Activated CD4-positive, alpha-beta memory T cell treated with anti-CD3 and anti-CD28 coated beads for 36 hours (primary cell): ENCODE measurements at regions of chr3 and their contacts with region 1.

Region 1: GRCh38 chr3:112519424-112520001 is 20.2 kb upstream of the BTLA start:
- DNase-seq: no peak
- H3K4me3 Mint-ChIP-seq: no peak overlapping the region
- H3K27ac Mint-ChIP-seq: no peak overlapping the region
- H3K4me1 Mint-ChIP-seq: peaks cover 18% of the 10 kb centered on the region
- H3K27me3 Mint-ChIP-seq: no peaks in the 10 kb centered on the region

Region 2: GRCh38 chr3:112136959-112137693 is 382.4 kb before region 1 on chr3:
- CTCF ChIA-PET with region 1: interaction called, 17 read pairs
- POLR2A ChIA-PET with region 1: no interaction called
- intact Hi-C with region 1: loop called (anchors 1 kb)
- DNase-seq: peak; percentile 59
- H3K4me3 Mint-ChIP-seq: no peak overlapping the region
- H3K27ac Mint-ChIP-seq: no peak overlapping the region
- H3K4me1 Mint-ChIP-seq: peaks cover 70% of the 10 kb centered on the region
- H3K27me3 Mint-ChIP-seq: no peaks in the 10 kb centered on the region

Region 3: DNA sequence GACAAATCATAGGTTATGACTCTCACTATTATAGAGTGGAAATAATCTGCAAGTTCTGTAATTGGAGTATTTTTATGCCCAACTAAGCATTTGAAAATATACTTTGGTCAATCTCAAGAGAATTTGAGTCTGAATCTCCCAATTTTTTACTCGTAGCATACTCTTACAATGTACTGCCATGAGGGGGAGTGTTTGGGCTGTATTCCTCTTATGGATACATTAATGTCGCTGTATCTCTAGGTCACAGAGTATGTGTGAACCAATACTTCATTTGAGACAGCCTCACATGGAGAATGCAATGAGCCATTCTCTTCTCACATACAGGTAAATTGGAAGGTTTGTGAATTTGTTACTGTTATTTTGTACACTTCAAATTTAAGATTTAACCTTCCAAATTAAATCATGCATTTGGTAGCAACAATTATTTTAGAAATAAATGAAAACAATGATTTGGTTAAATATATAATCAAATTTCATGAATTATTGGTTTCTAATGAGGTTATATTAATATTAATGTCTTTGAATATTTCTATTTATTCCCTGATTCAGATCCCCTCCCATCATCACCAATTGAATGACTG is 192.1 kb before region 1 on chr3:
- CTCF ChIA-PET with region 1: interaction called, 24 read pairs
- POLR2A ChIA-PET with region 1: no interaction called
- intact Hi-C with region 1: loop called (anchors 1 kb)
- DNase-seq: no peak
- H3K4me3 Mint-ChIP-seq: no peak overlapping the region
- H3K27ac Mint-ChIP-seq: no peak overlapping the region
- H3K4me1 Mint-ChIP-seq: peaks cover 5% of the 10 kb centered on the region
- H3K27me3 Mint-ChIP-seq: peaks cover 5% of the 10 kb centered on the region

Region 4: GRCh38 chr3:112333002-112333380 is 186.5 kb before region 1 on chr3 and contains the start of gene CD200:
- CTCF ChIA-PET with region 1: interaction called, 24 read pairs
- POLR2A ChIA-PET with region 1: no interaction called
- intact Hi-C with region 1: no loop called
- DNase-seq: peak; percentile 71
- H3K4me3 Mint-ChIP-seq: peak within 1 kb of the TSS; percentile 87
- H3K27ac Mint-ChIP-seq: peak within 1 kb of the TSS; percentile 88
- H3K4me1 Mint-ChIP-seq: peaks cover 46% of the 10 kb centered on the region
- H3K27me3 Mint-ChIP-seq: no peaks in the 10 kb centered on the region
- total RNA-seq, gene CD200: 34.2 to 34.5 TPM

Region 5: DNA sequence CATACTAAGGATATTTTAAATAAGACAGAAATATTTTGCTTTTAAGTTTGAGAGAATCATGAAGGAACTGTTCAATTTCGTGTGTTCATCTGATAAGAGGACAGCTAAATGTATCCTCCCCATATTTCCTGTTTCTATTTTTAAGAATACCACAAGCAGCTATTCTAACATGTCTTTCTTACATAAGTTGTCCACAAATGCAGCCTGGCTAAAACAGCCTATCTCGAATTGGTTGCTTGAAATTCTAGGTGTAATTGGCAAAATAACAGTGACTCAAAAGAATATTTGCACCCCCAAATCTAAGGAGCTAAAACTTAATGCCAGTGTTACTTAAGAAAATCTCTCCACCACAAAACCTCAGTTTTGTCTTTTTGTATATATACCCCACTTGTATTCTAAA is 55.2 kb before region 1 on chr3:
- CTCF ChIA-PET with region 1: interaction called, 3 read pairs
- POLR2A ChIA-PET with region 1: no interaction called
- intact Hi-C with region 1: loop called (anchors 1 kb)
- DNase-seq: no peak
- H3K4me3 Mint-ChIP-seq: no peak overlapping the region
- H3K27ac Mint-ChIP-seq: peak overlapping the region; percentile 31
- H3K4me1 Mint-ChIP-seq: peaks cover 84% of the 10 kb centered on the region
- H3K27me3 Mint-ChIP-seq: no peaks in the 10 kb centered on the region

Region 6: GRCh38 chr3:112489674-112490479 is 29.6 kb before region 1 on chr3:
- CTCF ChIA-PET with region 1: interaction called, 3 read pairs
- POLR2A ChIA-PET with region 1: no interaction called
- intact Hi-C with region 1: loop called (anchors 1 kb)
- DNase-seq: no peak
- H3K4me3 Mint-ChIP-seq: peak overlapping the region; percentile 47
- H3K27ac Mint-ChIP-seq: peak overlapping the region; percentile 68
- H3K4me1 Mint-ChIP-seq: peaks cover 64% of the 10 kb centered on the region
- H3K27me3 Mint-ChIP-seq: no peaks in the 10 kb centered on the region

Region 7: GRCh38 chr3:112498914-112499711 is 20.4 kb before region 1 on chr3 and contains the start of gene BTLA:
- CTCF ChIA-PET with region 1: interaction called, 5 read pairs
- POLR2A ChIA-PET with region 1: no interaction called
- intact Hi-C with region 1: loop called (anchors 1 kb)
- DNase-seq: peak; percentile 59
- H3K4me3 Mint-ChIP-seq: peak within 1 kb of the TSS; percentile 99
- H3K27ac Mint-ChIP-seq: peak within 1 kb of the TSS; percentile 98
- H3K4me1 Mint-ChIP-seq: peaks cover 55% of the 10 kb centered on the region
- H3K27me3 Mint-ChIP-seq: no peaks in the 10 kb centered on the region
- total RNA-seq, gene BTLA: 17.3 to 18.7 TPM